Activated T-helper 1 cell treated with anti-CD3 and anti-CD28 coated beads, Interleukin-12 subunit alpha, Interleukin-12 subunit beta, Interleukin-2, Interleukin-4 antibody, amounts not matched to agents 30 ng/mL and 10 ng/mL and 1 ng/mL, durations not matched to agents 14 hours and 24 hours and 36 hours (primary cell): ENCODE measurements at regions of chr5 and their contacts with region 1.

Region 1: GRCh38 chr5:142938266-142938880 is 168.2 kb downstream of the ARHGAP26 start:
- DNase-seq: no peak
- H3K4me3 Mint-ChIP-seq: no peak overlapping the region
- H3K27ac Mint-ChIP-seq: no peak overlapping the region
- H3K4me1 Mint-ChIP-seq: peaks cover 47% of the 10 kb centered on the region
- H3K27me3 Mint-ChIP-seq: no peaks in the 10 kb centered on the region

Region 2: DNA sequence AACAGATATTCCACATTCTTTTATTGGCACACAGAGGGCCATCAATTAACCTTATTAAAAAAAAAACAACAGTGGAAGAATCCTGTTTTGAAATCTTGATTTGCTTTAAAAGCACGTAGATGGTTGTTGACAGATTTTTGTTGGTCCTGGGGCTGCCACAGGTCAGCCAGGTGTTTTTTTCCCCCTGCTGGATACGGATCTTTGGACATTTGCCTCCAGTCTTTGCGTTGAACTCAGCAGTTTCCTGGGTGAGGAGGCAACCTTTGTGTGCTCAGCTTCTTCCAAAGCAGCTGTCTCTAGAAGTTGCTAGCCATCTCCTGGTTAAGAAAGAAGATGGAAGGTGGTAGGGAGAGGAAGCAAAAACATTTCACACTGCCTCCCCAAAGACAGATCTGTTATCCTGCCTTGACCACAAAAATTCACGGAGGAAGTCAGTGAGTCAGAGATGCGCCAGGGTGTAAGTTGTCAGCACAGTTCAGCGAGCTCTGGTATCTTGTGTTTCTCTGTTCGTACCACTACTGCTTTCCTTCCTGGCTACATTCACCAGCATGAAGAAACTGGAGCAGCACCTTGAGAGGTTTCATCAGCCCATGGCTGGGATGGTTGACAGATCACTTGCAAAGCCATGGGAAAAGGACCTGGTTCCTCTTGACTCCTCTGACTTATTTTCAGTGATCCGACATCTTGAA is 39.1 kb after region 1 on chr5:
- intact Hi-C with region 1: loop called (anchors 5 kb)
- DNase-seq: peak; percentile 55
- H3K4me3 Mint-ChIP-seq: peak overlapping the region; percentile 76
- H3K27ac Mint-ChIP-seq: peak overlapping the region; percentile 92
- H3K4me1 Mint-ChIP-seq: peaks cover 93% of the 10 kb centered on the region
- H3K27me3 Mint-ChIP-seq: no peaks in the 10 kb centered on the region